ENCODE measurements at regions of chrX and their contacts with region 1.

Region 1: GRCh38 chrX:30577362-30577991 is at the start of gene TASL:
- DNase-seq: peak; percentile 27
- H3K4me3 Mint-ChIP-seq: peak within 1 kb of the TSS; percentile 92
- H3K27ac Mint-ChIP-seq: peak within 1 kb of the TSS; percentile 96
- H3K4me1 Mint-ChIP-seq: peaks cover 18% of the 10 kb centered on the region
- H3K27me3 Mint-ChIP-seq: no peaks in the 10 kb centered on the region
- total RNA-seq, gene TASL: 5.2 and 5.4 TPM in 2 replicates

Region 2: GRCh38 chrX:30488092-30488491 is 89.4 kb before region 1 on chrX:
- intact Hi-C with region 1: no loop called
- DNase-seq: no peak
- H3K4me3 Mint-ChIP-seq: no peak overlapping the region
- H3K27ac Mint-ChIP-seq: no peak overlapping the region
- H3K4me1 Mint-ChIP-seq: no peaks in the 10 kb centered on the region
- H3K27me3 Mint-ChIP-seq: no peaks in the 10 kb centered on the region

Region 3: DNA sequence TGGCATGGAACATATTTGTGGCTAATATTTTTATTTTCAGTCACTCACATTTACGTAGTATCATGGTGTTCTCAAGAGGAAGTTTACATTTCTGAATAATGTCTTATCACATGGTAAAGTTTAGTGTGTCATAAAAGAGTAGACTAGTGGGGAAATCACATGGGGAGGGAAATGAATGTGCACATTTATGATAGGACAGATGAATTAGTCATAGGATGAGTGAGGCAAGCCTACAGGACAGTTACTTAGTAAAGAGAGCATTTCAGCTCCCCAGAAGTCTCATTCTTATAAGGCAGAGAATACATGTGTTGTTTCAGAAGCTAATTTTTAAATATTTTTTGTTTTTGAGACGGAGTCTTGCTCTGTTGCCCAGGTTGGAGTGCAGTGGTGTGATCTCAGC is 81.9 kb after region 1 on chrX:
- intact Hi-C with region 1: loop called (anchors 2 kb)
- DNase-seq: no peak
- H3K4me3 Mint-ChIP-seq: peak overlapping the region; percentile 5
- H3K27ac Mint-ChIP-seq: peak overlapping the region; percentile 88
- H3K4me1 Mint-ChIP-seq: peaks cover 41% of the 10 kb centered on the region
- H3K27me3 Mint-ChIP-seq: no peaks in the 10 kb centered on the region

Region 4: GRCh38 chrX:30690330-30690729 is 112.9 kb after region 1 on chrX:
- intact Hi-C with region 1: no loop called
- DNase-seq: no peak
- H3K4me3 Mint-ChIP-seq: no peak overlapping the region
- H3K27ac Mint-ChIP-seq: no peak overlapping the region
- H3K4me1 Mint-ChIP-seq: no peaks in the 10 kb centered on the region
- H3K27me3 Mint-ChIP-seq: no peaks in the 10 kb centered on the region

Region 5: DNA sequence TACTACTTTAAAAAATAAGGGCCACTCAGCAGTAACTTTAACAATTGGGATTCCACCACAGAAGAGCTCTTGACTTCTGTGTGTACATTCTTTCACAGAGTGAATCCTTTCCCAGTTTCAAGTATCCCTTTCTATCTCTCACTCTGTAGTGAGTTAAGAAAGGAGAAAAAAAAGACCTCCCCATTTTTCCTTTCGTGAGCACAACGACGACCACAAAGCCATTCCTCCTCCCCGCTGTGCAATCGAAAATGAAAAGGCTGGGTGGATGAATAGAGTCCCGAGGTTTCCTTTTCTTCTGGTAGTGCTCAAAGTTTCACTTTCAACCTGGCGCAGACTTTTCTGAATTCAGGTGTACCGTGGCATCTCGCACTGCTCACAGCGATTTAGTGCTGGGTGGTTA is 253.6 kb after region 1 on chrX:
- intact Hi-C with region 1: loop called (anchors 5 kb)
- DNase-seq: peak; percentile 20
- H3K4me3 Mint-ChIP-seq: peak overlapping the region; percentile 5
- H3K27ac Mint-ChIP-seq: peak overlapping the region; percentile 33
- H3K4me1 Mint-ChIP-seq: peaks cover 22% of the 10 kb centered on the region
- H3K27me3 Mint-ChIP-seq: no peaks in the 10 kb centered on the region

Measured in activated T-helper 2 cell treated with anti-CD3 and anti-CD28 coated beads, Interferon-gamma antibody, Interleukin-2, Interleukin-4, amounts not matched to agents 10 μg/mL and 5 μg/mL and 100 μg/mL, durations not matched to agents 14 hours and 24 hours and 36 hours (primary cell).